GM12878 (cell line): ENCODE measurements at regions of chr6 and their contacts with region 1.

Region 1: GRCh38 chr6:16183187-16183664 is 54.3 kb downstream of the MYLIP start:
- DNase-seq: peak; percentile 35
- ATAC-seq: peak; percentile 65
- H3K4me3 ChIP-seq: no peak overlapping the region
- H3K27ac ChIP-seq: no peak overlapping the region
- H3K4me1 ChIP-seq: no peaks in the 10 kb centered on the region
- H3K27me3 ChIP-seq: no peaks in the 10 kb centered on the region; a peak in 1 of 4 replicates
- CTCF ChIP-seq: peak; percentile 61 to 79 (median 63)
- EP300 ChIP-seq: no peak
- POLR2A ChIP-seq: no peak
- RAD21 ChIP-seq: peak; percentile 78

Region 2: DNA sequence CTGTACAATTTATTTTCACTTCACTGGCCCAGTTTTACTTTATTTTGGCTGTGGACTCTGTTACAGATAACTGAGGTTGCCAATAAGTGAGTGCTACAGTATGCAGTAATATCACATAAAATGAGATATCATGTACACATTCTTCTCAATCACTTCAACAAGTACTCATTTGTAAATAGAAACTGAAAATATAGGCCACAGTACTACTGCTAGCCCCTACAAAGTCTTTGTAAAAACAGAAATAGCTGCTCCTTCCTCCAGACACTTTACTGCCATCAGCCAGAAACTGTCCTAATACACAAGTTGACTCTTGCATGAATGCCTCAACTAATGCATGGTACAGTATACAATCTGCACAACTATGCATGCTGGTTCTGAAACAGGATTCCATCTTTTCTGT is 529.6 kb before region 1 on chr6:
- CTCF ChIA-PET with region 1: interaction called, 16 read pairs
- POLR2A ChIA-PET with region 1: no interaction called
- RAD21 ChIA-PET with region 1: interaction called, 7 read pairs
- SMC1A ChIA-PET with region 1: interaction called, 4 read pairs
- in situ Hi-C with region 1: no loop called
- intact Hi-C with region 1: no loop called
- DNase-seq: peak; percentile 36
- ATAC-seq: peak; percentile 74
- H3K4me3 ChIP-seq: no peak overlapping the region
- H3K27ac ChIP-seq: peak overlapping the region; percentile 1; the same call in 1 of the 2 replicates
- H3K4me1 ChIP-seq: peaks cover 23% of the 10 kb centered on the region
- H3K27me3 ChIP-seq: no peaks in the 10 kb centered on the region
- CTCF ChIP-seq: no peak
- EP300 ChIP-seq: no peak
- POLR2A ChIP-seq: no peak
- RAD21 ChIP-seq: no peak

Region 3: DNA sequence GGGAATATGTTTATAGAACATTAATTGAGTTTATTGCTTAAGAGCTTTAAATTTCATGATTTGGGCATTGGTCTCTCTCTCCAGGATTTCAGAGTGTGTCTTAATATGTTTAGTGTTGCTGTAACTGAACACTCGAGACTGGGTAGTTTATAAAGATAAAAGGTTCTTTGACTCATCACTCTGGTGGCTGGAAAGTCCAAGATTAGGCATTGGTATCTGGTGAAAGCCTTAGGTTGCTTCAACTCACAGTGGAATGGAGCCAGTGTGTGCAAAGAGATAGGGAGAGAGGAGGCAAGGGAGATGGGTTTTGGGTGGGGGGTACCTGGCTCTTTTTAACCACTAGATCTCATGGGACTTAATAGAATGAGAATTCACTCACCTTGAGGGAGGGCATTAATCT is 484.8 kb before region 1 on chr6:
- CTCF ChIA-PET with region 1: interaction called, 92 read pairs
- POLR2A ChIA-PET with region 1: interaction called, 4 read pairs
- RAD21 ChIA-PET with region 1: interaction called, 129 read pairs
- SMC1A ChIA-PET with region 1: interaction called, 8 read pairs
- in situ Hi-C with region 1: loop called (anchors 5 kb)
- intact Hi-C with region 1: no loop called
- DNase-seq: no peak
- ATAC-seq: no peak
- H3K4me3 ChIP-seq: no peak overlapping the region
- H3K27ac ChIP-seq: no peak overlapping the region
- H3K4me1 ChIP-seq: no peaks in the 10 kb centered on the region
- H3K27me3 ChIP-seq: no peaks in the 10 kb centered on the region
- CTCF ChIP-seq: no peak
- EP300 ChIP-seq: no peak
- POLR2A ChIP-seq: no peak
- RAD21 ChIP-seq: no peak

Region 4: GRCh38 chr6:15893556-15894268 is 289.5 kb before region 1 on chr6:
- CTCF ChIA-PET with region 1: interaction called, 17 read pairs
- POLR2A ChIA-PET with region 1: no interaction called
- RAD21 ChIA-PET with region 1: interaction called, 7 read pairs
- SMC1A ChIA-PET with region 1: interaction called, 7 read pairs
- in situ Hi-C with region 1: no loop called
- intact Hi-C with region 1: no loop called
- DNase-seq: no peak
- ATAC-seq: 0 out of 3 replicates have a peak, but pooled peaks have one; percentile 22
- H3K4me3 ChIP-seq: no peak overlapping the region
- H3K27ac ChIP-seq: no peak overlapping the region
- H3K4me1 ChIP-seq: peaks cover 14% of the 10 kb centered on the region
- H3K27me3 ChIP-seq: no peaks in the 10 kb centered on the region
- CTCF ChIP-seq: peak in 2 of 3 experiments; percentile 37 to 59; a peak in 3 of 6 replicates
- EP300 ChIP-seq: no peak
- POLR2A ChIP-seq: no peak
- RAD21 ChIP-seq: peak; percentile 41

Region 5: GRCh38 chr6:15969236-15969778 is 213.9 kb before region 1 on chr6:
- CTCF ChIA-PET with region 1: no interaction called
- POLR2A ChIA-PET with region 1: no interaction called
- RAD21 ChIA-PET with region 1: no interaction called
- SMC1A ChIA-PET with region 1: no interaction called
- in situ Hi-C with region 1: no loop called
- intact Hi-C with region 1: no loop called
- DNase-seq: no peak
- ATAC-seq: no peak
- H3K4me3 ChIP-seq: no peak overlapping the region
- H3K27ac ChIP-seq: no peak overlapping the region
- H3K4me1 ChIP-seq: no peaks in the 10 kb centered on the region
- H3K27me3 ChIP-seq: no peaks in the 10 kb centered on the region
- CTCF ChIP-seq: no peak
- EP300 ChIP-seq: no peak
- POLR2A ChIP-seq: no peak
- RAD21 ChIP-seq: no peak

Region 6: DNA sequence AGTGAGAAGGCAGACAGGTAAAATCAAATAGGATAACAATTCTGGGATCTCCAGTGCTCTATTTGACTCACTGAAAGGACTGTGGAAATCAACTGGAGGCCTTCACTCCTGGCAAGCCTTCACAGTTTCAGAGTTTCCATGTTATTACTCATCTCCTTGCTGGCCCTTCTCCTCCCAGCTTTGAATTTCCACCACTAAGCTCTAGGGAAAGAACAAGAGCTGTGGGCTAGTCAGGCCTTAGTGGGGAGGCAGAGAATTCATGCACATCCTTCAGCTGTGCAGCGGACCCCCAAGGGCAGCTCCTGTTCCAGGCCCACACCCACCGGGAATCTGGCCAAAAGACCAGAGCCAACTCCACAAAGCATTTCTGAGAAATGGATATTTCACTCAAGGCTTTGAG is 28.3 kb before region 1 on chr6:
- CTCF ChIA-PET with region 1: interaction called, 14 read pairs
- POLR2A ChIA-PET with region 1: no interaction called
- RAD21 ChIA-PET with region 1: interaction called, 4 read pairs
- SMC1A ChIA-PET with region 1: interaction called, 5 read pairs
- in situ Hi-C with region 1: no loop called
- intact Hi-C with region 1: no loop called
- DNase-seq: no peak
- ATAC-seq: no peak
- H3K4me3 ChIP-seq: no peak overlapping the region
- H3K27ac ChIP-seq: no peak overlapping the region
- H3K4me1 ChIP-seq: no peaks in the 10 kb centered on the region
- H3K27me3 ChIP-seq: no peaks in the 10 kb centered on the region
- CTCF ChIP-seq: no peak
- EP300 ChIP-seq: no peak
- POLR2A ChIP-seq: no peak
- RAD21 ChIP-seq: no peak

Region 7: GRCh38 chr6:16206595-16207037 is 23.4 kb after region 1 on chr6:
- CTCF ChIA-PET with region 1: interaction called, 130 read pairs
- POLR2A ChIA-PET with region 1: interaction called, 4 read pairs
- RAD21 ChIA-PET with region 1: interaction called, 63 read pairs
- SMC1A ChIA-PET with region 1: interaction called, 46 read pairs
- in situ Hi-C with region 1: no loop called
- intact Hi-C with region 1: loop called (anchors 2 kb)
- DNase-seq: no peak
- ATAC-seq: peak; percentile 57
- H3K4me3 ChIP-seq: no peak overlapping the region
- H3K27ac ChIP-seq: no peak overlapping the region
- H3K4me1 ChIP-seq: peaks cover 16% of the 10 kb centered on the region
- H3K27me3 ChIP-seq: peaks cover 0 to 3% of the 10 kb centered on the region in 2 experiments; a peak in 1 of 4 replicates
- CTCF ChIP-seq: peak; percentile 86 to 95 (median 93)
- EP300 ChIP-seq: no peak
- POLR2A ChIP-seq: no peak
- RAD21 ChIP-seq: peak; percentile 96

Region 8: GRCh38 chr6:16228709-16229665 is 45.8 kb after region 1 on chr6:
- CTCF ChIA-PET with region 1: no interaction called
- POLR2A ChIA-PET with region 1: no interaction called
- RAD21 ChIA-PET with region 1: no interaction called
- SMC1A ChIA-PET with region 1: no interaction called
- in situ Hi-C with region 1: no loop called
- intact Hi-C with region 1: no loop called
- DNase-seq: no peak
- ATAC-seq: peak; percentile 55
- H3K4me3 ChIP-seq: no peak overlapping the region
- H3K27ac ChIP-seq: no peak overlapping the region
- H3K4me1 ChIP-seq: no peaks in the 10 kb centered on the region
- H3K27me3 ChIP-seq: peaks cover 1 to 4% of the 10 kb centered on the region in 2 experiments
- CTCF ChIP-seq: peak in 2 of 3 experiments; percentile 4 to 29; a peak in 1 of 6 replicates
- EP300 ChIP-seq: no peak
- POLR2A ChIP-seq: no peak
- RAD21 ChIP-seq: no peak

Region 9: GRCh38 chr6:16420715-16421461 is 237.7 kb after region 1 on chr6:
- CTCF ChIA-PET with region 1: no interaction called
- POLR2A ChIA-PET with region 1: no interaction called
- RAD21 ChIA-PET with region 1: no interaction called
- SMC1A ChIA-PET with region 1: no interaction called
- in situ Hi-C with region 1: no loop called
- intact Hi-C with region 1: no loop called
- DNase-seq: peak; percentile 97
- ATAC-seq: peak; percentile 68
- H3K4me3 ChIP-seq: no peak overlapping the region
- H3K27ac ChIP-seq: peak overlapping the region; percentile 98
- H3K4me1 ChIP-seq: peaks cover 36% of the 10 kb centered on the region
- H3K27me3 ChIP-seq: no peaks in the 10 kb centered on the region
- CTCF ChIP-seq: no peak
- EP300 ChIP-seq: peak; percentile 91; a peak in 3 of 4 replicates
- POLR2A ChIP-seq: peak; percentile 48; the same call in 1 of the 2 replicates
- RAD21 ChIP-seq: 0 out of 2 replicates have a peak, but pooled peaks have one; percentile 18